OCI-LY7 (cell line): ENCODE measurements at regions of chr5 and their contacts with region 1.

Region 1: GRCh38 chr5:38193015-38193581 is 65.3 kb upstream of the EGFLAM start:
- DNase-seq: peak; percentile 57
- H3K4me3 ChIP-seq: no peak overlapping the region
- H3K27ac ChIP-seq: no peak overlapping the region
- H3K4me1 ChIP-seq: no peaks in the 10 kb centered on the region
- CTCF ChIP-seq: peak; percentile 91

Region 2: GRCh38 chr5:37412515-37413277 is 780.4 kb before region 1 on chr5:
- CTCF ChIA-PET with region 1: no interaction called
- POLR2A ChIA-PET with region 1: no interaction called
- intact Hi-C with region 1: loop called (anchors 2 kb)
- DNase-seq: peak; percentile 77
- H3K4me3 ChIP-seq: no peak overlapping the region
- H3K27ac ChIP-seq: no peak overlapping the region
- H3K4me1 ChIP-seq: no peaks in the 10 kb centered on the region
- CTCF ChIP-seq: peak; percentile 99

Region 3: GRCh38 chr5:37774912-37775483 is 418.1 kb before region 1 on chr5:
- CTCF ChIA-PET with region 1: no interaction called
- POLR2A ChIA-PET with region 1: no interaction called
- intact Hi-C with region 1: no loop called
- DNase-seq: peak; percentile 7
- H3K4me3 ChIP-seq: no peak overlapping the region
- H3K27ac ChIP-seq: no peak overlapping the region
- H3K4me1 ChIP-seq: no peaks in the 10 kb centered on the region
- CTCF ChIP-seq: peak; percentile 83

Region 4: DNA sequence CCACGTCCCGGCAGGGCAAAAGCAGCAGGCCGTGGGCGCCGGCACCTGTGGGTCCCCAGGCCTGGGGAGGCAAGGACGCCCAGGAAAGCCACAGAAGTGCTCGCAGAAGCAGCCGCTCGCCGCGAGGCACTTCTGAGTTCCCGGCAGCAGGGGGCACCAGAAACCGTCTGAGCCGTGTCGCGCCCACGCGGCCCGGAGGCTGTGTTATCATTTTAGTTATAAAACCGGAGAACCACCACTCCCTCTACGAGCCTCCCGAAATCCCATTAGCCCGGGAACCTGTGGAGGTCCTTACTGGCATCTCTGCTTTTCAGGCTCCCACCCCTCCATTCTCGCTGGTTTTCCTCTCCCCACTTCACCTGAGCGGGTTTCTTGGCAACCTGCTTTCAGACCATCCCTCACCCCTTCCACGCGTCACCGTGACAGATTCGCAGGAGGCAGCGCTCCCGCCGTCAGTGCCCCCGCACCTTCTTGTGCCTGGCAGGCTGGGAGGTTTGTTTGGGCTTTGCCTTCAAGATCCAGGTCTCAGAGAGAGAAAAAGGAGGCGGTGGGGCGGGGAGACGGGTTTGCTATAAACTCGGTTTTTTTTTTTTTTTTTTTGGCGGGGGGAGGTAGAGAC is 355.6 kb before region 1 on chr5:
- CTCF ChIA-PET with region 1: no interaction called
- POLR2A ChIA-PET with region 1: no interaction called
- intact Hi-C with region 1: loop called (anchors 2 kb)
- DNase-seq: peak; percentile 45
- H3K4me3 ChIP-seq: no peak overlapping the region
- H3K27ac ChIP-seq: no peak overlapping the region
- H3K4me1 ChIP-seq: no peaks in the 10 kb centered on the region
- CTCF ChIP-seq: peak; percentile 78

Region 5: GRCh38 chr5:38104497-38105230 is 88.4 kb before region 1 on chr5:
- CTCF ChIA-PET with region 1: no interaction called
- POLR2A ChIA-PET with region 1: no interaction called
- intact Hi-C with region 1: no loop called
- DNase-seq: no peak
- H3K4me3 ChIP-seq: no peak overlapping the region
- H3K27ac ChIP-seq: no peak overlapping the region
- H3K4me1 ChIP-seq: no peaks in the 10 kb centered on the region
- CTCF ChIP-seq: no peak